A673 (cell line): ENCODE measurements at regions of chr1 and their contacts with region 1.

Region 1: GRCh38 chr1:198359024-198359653 is 181.3 kb downstream of the ATP6V1G3 start:
- DNase-seq: peak; percentile 35
- H3K4me3 ChIP-seq: no peak overlapping the region
- H3K27ac ChIP-seq: no peak overlapping the region
- H3K4me1 ChIP-seq: no peaks in the 10 kb centered on the region
- H3K27me3 ChIP-seq: no peaks in the 10 kb centered on the region
- CTCF ChIP-seq: peak; percentile 64

Region 2: GRCh38 chr1:197915862-197916499 is 443.2 kb before region 1 on chr1:
- CTCF ChIA-PET with region 1: no interaction called
- POLR2A ChIA-PET with region 1: no interaction called
- intact Hi-C with region 1: loop called (anchors 10 kb)
- DNase-seq: peak; percentile 68
- H3K4me3 ChIP-seq: peak overlapping the region; percentile 34
- H3K27ac ChIP-seq: no peak overlapping the region
- H3K4me1 ChIP-seq: peaks cover 32% of the 10 kb centered on the region
- H3K27me3 ChIP-seq: peaks cover 99% of the 10 kb centered on the region
- CTCF ChIP-seq: peak; percentile 61

Region 3: GRCh38 chr1:197994907-197995407 is 364.2 kb before region 1 on chr1:
- CTCF ChIA-PET with region 1: no interaction called
- POLR2A ChIA-PET with region 1: no interaction called
- intact Hi-C with region 1: no loop called
- DNase-seq: no peak
- H3K4me3 ChIP-seq: no peak overlapping the region
- H3K27ac ChIP-seq: no peak overlapping the region
- H3K4me1 ChIP-seq: no peaks in the 10 kb centered on the region
- H3K27me3 ChIP-seq: no peaks in the 10 kb centered on the region
- CTCF ChIP-seq: no peak

Region 4: DNA sequence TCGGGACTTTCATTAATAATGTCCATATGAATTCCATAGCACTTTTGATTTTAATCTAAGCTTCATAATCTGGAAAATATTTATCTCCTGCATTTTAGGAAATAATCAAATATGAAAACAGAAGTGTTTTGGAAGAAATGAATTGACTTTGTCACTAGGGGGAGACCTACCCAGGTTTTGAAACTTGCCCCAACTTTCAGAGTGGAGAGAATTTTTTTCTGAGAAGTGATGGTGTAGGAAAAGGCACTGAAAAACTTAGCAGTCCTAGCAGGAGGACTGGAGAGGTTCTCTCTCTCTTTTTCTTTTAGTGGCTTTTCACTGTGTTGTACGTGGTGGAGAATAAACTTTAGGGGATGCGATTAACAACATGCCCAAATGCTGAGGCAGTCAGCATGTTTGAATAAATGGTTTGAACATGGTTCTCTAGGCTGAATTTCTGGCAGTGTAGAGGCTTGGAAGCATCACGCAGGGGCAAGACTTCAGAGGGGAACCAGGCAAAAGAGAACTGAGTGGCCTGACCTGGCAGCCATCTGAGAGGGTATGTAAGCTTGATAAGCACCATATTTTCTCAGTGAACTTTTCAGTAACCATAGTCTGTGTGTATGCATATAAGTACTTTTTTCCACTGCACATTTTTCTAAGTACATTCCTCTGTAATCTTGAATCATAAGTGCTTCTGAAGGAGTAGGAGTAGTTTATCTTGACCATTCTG is 270.6 kb before region 1 on chr1:
- CTCF ChIA-PET with region 1: no interaction called
- POLR2A ChIA-PET with region 1: no interaction called
- intact Hi-C with region 1: loop called (anchors 5 kb)
- DNase-seq: peak; percentile 50
- H3K4me3 ChIP-seq: no peak overlapping the region
- H3K27ac ChIP-seq: no peak overlapping the region
- H3K4me1 ChIP-seq: no peaks in the 10 kb centered on the region
- H3K27me3 ChIP-seq: no peaks in the 10 kb centered on the region
- CTCF ChIP-seq: peak; percentile 76

Region 5: GRCh38 chr1:198575292-198575691 is 216.2 kb after region 1 on chr1:
- CTCF ChIA-PET with region 1: no interaction called
- POLR2A ChIA-PET with region 1: no interaction called
- intact Hi-C with region 1: no loop called
- DNase-seq: no peak
- H3K4me3 ChIP-seq: no peak overlapping the region
- H3K27ac ChIP-seq: no peak overlapping the region
- H3K4me1 ChIP-seq: no peaks in the 10 kb centered on the region
- H3K27me3 ChIP-seq: no peaks in the 10 kb centered on the region
- CTCF ChIP-seq: no peak